ENCODE measurements at regions of chr20 and their contacts with region 1.

Region 1: GRCh38 chr20:36439040-36439730 is 102.1 kb upstream of the MYL9 start:
- DNase-seq: peak; percentile 68 to 76
- ATAC-seq: peak; percentile 67 to 81
- H3K4me3 ChIP-seq: no peak overlapping the region
- H3K27ac ChIP-seq: no peak overlapping the region
- H3K4me1 ChIP-seq: no peaks in the 10 kb centered on the region
- CTCF ChIP-seq: peak; percentile 88
- EP300 ChIP-seq: no peak
- POLR2A ChIP-seq: no peak
- RAD21 ChIP-seq: peak; percentile 93 to 94

Region 2: GRCh38 chr20:36153736-36154699 is 285.2 kb before region 1 on chr20:
- CTCF ChIA-PET with region 1: interaction called, 32 read pairs
- POLR2A ChIA-PET with region 1: no interaction called
- DNase-seq: peak; percentile 60 to 72
- ATAC-seq: peak; percentile 83 to 89
- H3K4me3 ChIP-seq: peak overlapping the region; percentile 80
- H3K27ac ChIP-seq: peak overlapping the region; percentile 87 to 94
- H3K4me1 ChIP-seq: peaks cover 64% of the 10 kb centered on the region
- CTCF ChIP-seq: no peak
- EP300 ChIP-seq: no peak
- POLR2A ChIP-seq: no peak
- RAD21 ChIP-seq: no peak

Region 3: GRCh38 chr20:36214684-36215256 is 224.4 kb before region 1 on chr20:
- CTCF ChIA-PET with region 1: interaction called, 142 read pairs
- POLR2A ChIA-PET with region 1: no interaction called
- DNase-seq: peak; percentile 46 to 54
- ATAC-seq: peak; percentile 48 to 74; a peak in 3 of 6 replicates
- H3K4me3 ChIP-seq: no peak overlapping the region
- H3K27ac ChIP-seq: no peak overlapping the region
- H3K4me1 ChIP-seq: no peaks in the 10 kb centered on the region
- CTCF ChIP-seq: peak; percentile 56
- EP300 ChIP-seq: no peak
- POLR2A ChIP-seq: no peak
- RAD21 ChIP-seq: peak; percentile 55 to 67

Region 4: DNA sequence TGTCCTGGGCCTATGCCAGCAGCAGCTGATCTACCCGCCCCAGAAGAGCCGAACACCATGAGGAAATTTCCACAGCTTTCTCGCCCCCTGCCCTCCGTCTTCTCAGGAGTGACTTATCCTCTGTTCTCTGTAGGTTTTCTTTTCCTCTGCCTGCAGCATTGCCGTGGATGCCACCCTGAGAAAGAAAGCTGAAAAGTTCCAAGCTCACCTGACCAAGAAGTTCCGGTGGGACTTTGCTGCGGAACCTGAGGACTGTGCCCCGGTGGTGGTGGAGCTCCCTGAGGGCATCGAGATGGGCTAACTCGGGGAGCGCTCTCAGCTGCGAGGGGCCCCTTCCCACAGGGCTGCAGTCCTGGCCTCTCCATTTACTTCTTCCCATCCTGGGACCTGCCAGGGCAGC is 183.7 kb before region 1 on chr20:
- CTCF ChIA-PET with region 1: interaction called, 12 read pairs
- POLR2A ChIA-PET with region 1: no interaction called
- DNase-seq: no peak
- ATAC-seq: no peak
- H3K4me3 ChIP-seq: no peak overlapping the region
- H3K27ac ChIP-seq: no peak overlapping the region
- H3K4me1 ChIP-seq: no peaks in the 10 kb centered on the region
- CTCF ChIP-seq: no peak
- EP300 ChIP-seq: no peak
- POLR2A ChIP-seq: no peak
- RAD21 ChIP-seq: no peak

Region 5: GRCh38 chr20:36364506-36364905 is 74.7 kb before region 1 on chr20:
- CTCF ChIA-PET with region 1: interaction called, 12 read pairs
- POLR2A ChIA-PET with region 1: no interaction called
- DNase-seq: no peak
- ATAC-seq: no peak
- H3K4me3 ChIP-seq: no peak overlapping the region
- H3K27ac ChIP-seq: no peak overlapping the region
- H3K4me1 ChIP-seq: no peaks in the 10 kb centered on the region
- CTCF ChIP-seq: no peak
- EP300 ChIP-seq: no peak
- POLR2A ChIP-seq: no peak
- RAD21 ChIP-seq: no peak

Region 6: DNA sequence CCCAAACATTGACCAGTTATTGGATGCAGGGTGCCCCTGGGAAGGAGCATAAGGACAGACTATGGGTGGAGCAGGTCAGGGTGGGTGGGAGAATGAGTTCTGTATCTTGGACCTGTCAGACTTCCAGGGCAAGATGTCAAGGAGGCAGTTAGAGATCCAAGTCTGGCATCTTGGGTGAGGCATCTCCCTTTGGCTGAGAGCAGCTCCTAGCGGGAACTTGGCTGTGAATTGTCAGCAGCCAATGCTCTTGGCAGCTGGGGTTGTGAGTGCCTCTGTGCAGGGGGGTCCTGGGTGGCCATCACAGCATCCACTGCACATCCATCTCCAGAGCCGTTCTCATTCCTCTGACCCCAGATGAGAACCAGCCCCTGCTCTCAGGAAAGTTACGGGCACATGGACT is 14.9 kb before region 1 on chr20:
- CTCF ChIA-PET with region 1: interaction called, 40 read pairs
- POLR2A ChIA-PET with region 1: no interaction called
- DNase-seq: no peak
- ATAC-seq: peak; percentile 36 to 51; a peak in 4 of 6 replicates
- H3K4me3 ChIP-seq: no peak overlapping the region
- H3K27ac ChIP-seq: no peak overlapping the region
- H3K4me1 ChIP-seq: no peaks in the 10 kb centered on the region
- CTCF ChIP-seq: no peak
- EP300 ChIP-seq: no peak
- POLR2A ChIP-seq: no peak
- RAD21 ChIP-seq: no peak

Measured in A549 (cell line).